GM10248 (cell line): ENCODE measurements at regions of chr18 and their contacts with region 1.

Region 1: GRCh38 chr18:9516437-9517064 is 41.2 kb downstream of the RALBP1 start:
- DNase-seq: peak; percentile 58
- CTCF ChIP-seq: peak; percentile 84

Region 2: GRCh38 chr18:9506046-9506792 is 10.3 kb before region 1 on chr18:
- CTCF ChIA-PET with region 1: interaction called, 26 read pairs
- POLR2A ChIA-PET with region 1: no interaction called
- DNase-seq: no peak
- CTCF ChIP-seq: no peak

Region 3: GRCh38 chr18:9530231-9531009 is 13.9 kb after region 1 on chr18:
- CTCF ChIA-PET with region 1: interaction called, 13 read pairs
- POLR2A ChIA-PET with region 1: no interaction called
- DNase-seq: no peak
- CTCF ChIP-seq: no peak